ENCODE measurements at regions of chr3 and their contacts with region 1.

Region 1: DNA sequence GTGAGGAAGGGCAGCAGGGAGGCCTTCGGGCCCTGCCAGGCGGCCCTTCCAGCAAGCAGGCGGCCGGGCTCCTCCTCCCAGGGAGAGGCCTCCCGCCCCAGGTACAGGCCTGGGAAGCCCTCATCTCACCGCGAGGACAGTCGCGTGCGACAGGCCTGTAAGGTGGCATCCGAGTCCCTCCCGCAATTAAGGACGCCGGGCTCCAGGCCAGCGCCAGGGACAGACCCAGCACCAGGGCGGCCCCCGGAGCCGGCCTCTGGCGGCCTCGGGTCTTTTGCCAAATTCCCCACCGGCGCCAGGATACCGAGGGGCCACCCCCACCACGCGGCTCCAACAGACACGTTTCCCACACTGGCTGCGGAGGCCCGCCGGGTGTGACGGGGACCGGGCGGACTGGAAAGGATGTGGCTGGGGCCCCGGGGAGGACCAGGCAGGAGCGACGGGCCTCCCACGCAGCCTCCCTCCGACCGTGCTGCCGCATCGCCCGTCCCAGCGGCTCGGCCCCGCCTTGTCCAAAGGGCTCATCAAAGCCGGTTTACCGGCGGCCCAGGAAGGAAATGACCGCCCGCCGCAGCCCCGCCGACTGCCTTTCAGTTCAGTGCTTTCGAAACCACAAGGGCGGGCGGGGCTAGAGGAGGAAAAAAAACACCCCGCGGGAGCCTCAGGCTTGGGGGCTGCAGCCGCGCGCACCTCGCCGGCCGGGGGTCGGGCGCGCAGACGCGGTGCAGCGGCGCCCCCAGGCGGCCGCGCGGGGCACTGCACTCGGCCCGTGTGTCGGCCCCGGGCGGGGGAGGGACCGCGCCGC is 11.3 kb downstream of the XXYLT1 start:
- DNase-seq: peak; percentile 63 to 84
- ATAC-seq: peak; percentile 82 to 83
- H3K4me3 ChIP-seq: peak overlapping the region; percentile 59 to 81 (median 75)
- H3K27ac ChIP-seq: peak overlapping the region; percentile 78 to 87 (median 84)
- H3K4me1 ChIP-seq: peaks cover 10 to 22% of the 10 kb centered on the region in 2 donors
- H3K27me3 ChIP-seq: no peaks in the 10 kb centered on the region
- CTCF ChIP-seq: peak in 4 of 5 experiments; percentile 98 to 100 (median 99)
- POLR2A ChIP-seq: peak; percentile 60 to 67

Region 2: GRCh38 chr3:194769020-194769643 is 490.5 kb before region 1 on chr3:
- in situ Hi-C with region 1: no loop called
- intact Hi-C with region 1: loop called (anchors 5 kb)
- DNase-seq: peak; percentile 91
- ATAC-seq: peak; percentile 95 to 96
- H3K4me3 ChIP-seq: peak overlapping the region; percentile 43 to 65 (median 48)
- H3K27ac ChIP-seq: peak overlapping the region; percentile 43 to 62 (median 53)
- H3K4me1 ChIP-seq: peaks cover 10 to 19% of the 10 kb centered on the region in 2 donors
- H3K27me3 ChIP-seq: no peaks in the 10 kb centered on the region
- CTCF ChIP-seq: no peak
- POLR2A ChIP-seq: peak in 1 of 2 donors; percentile 19

Region 3: GRCh38 chr3:195106418-195106906 is 153.2 kb before region 1 on chr3:
- in situ Hi-C with region 1: no loop called
- intact Hi-C with region 1: loop called (anchors 5 kb)
- DNase-seq: peak in 1 of 2 donors; percentile 33
- ATAC-seq: peak; percentile 33 to 68
- H3K4me3 ChIP-seq: peak overlapping the region; percentile 5 to 42 (median 31)
- H3K27ac ChIP-seq: no peak overlapping the region
- H3K4me1 ChIP-seq: peaks cover 13 to 23% of the 10 kb centered on the region in 2 donors
- H3K27me3 ChIP-seq: no peaks in the 10 kb centered on the region
- CTCF ChIP-seq: peak; percentile 96 to 100 (median 99)
- POLR2A ChIP-seq: no peak

Region 4: DNA sequence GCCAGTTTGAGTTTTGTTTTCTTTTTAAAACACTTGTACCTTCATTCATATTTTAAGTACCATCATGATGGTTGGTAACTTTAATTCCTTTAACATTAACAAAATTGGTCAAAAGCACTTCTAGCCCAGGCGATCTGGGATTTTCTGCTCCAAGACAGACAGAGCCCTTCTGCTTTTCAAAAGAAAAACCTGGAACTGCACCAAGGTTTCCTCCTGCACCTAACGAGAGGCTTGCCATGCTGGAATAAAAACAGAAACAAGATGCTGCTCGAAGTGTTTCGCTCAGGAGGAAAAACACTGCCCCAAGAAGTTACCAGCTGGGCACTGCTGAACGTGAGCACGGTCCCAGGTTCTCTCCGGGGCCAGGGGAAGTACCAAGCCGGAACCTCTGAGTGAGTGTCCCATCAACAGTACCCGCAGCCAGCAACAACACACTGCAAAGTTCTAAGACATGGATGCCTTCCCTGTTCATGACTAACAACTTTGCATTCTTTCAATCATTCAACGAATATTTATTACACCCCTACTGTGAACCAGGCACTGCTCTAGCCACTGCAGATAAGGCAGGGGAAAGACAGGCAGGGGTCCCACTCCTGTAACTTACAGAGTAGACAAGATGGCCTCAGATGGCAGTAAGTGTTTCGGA is 87.5 kb before region 1 on chr3:
- in situ Hi-C with region 1: no loop called
- intact Hi-C with region 1: loop called (anchors 5 kb)
- DNase-seq: no peak
- ATAC-seq: peak; percentile 9 to 28
- H3K4me3 ChIP-seq: no peak overlapping the region
- H3K27ac ChIP-seq: peak overlapping the region; percentile 44 to 78 (median 74)
- H3K4me1 ChIP-seq: peaks cover 18 to 23% of the 10 kb centered on the region in 2 donors
- H3K27me3 ChIP-seq: no peaks in the 10 kb centered on the region
- CTCF ChIP-seq: no peak
- POLR2A ChIP-seq: no peak

Measured in gastrocnemius medialis (tissue), 4 donors.